Natural killer cell (primary cell): ENCODE measurements at regions of chr7 and their contacts with region 1.

Region 1: GRCh38 chr7:52685206-52685732 is 350.2 kb upstream of the POM121L12 start:
- DNase-seq: no peak
- ATAC-seq: no peak
- H3K4me3 ChIP-seq: no peak overlapping the region
- H3K4me3 Mint-ChIP-seq: no peak overlapping the region
- H3K27ac ChIP-seq: no peak overlapping the region
- H3K27ac Mint-ChIP-seq: no peak overlapping the region
- H3K4me1 ChIP-seq: no peaks in the 10 kb centered on the region
- H3K4me1 Mint-ChIP-seq: no peaks in the 10 kb centered on the region
- H3K27me3 ChIP-seq: no peaks in the 10 kb centered on the region
- H3K27me3 Mint-ChIP-seq: no peaks in the 10 kb centered on the region
- CTCF ChIP-seq: no peak

Region 2: GRCh38 chr7:52668435-52668834 is 16.8 kb before region 1 on chr7:
- intact Hi-C with region 1: loop called (anchors 2 kb)
- DNase-seq: no peak
- ATAC-seq: no peak
- H3K4me3 ChIP-seq: no peak overlapping the region
- H3K4me3 Mint-ChIP-seq: no peak overlapping the region
- H3K27ac ChIP-seq: no peak overlapping the region
- H3K27ac Mint-ChIP-seq: no peak overlapping the region
- H3K4me1 ChIP-seq: no peaks in the 10 kb centered on the region
- H3K4me1 Mint-ChIP-seq: no peaks in the 10 kb centered on the region
- H3K27me3 ChIP-seq: no peaks in the 10 kb centered on the region
- H3K27me3 Mint-ChIP-seq: no peaks in the 10 kb centered on the region
- CTCF ChIP-seq: no peak